ENCODE measurements at regions of chr4 and their contacts with region 1.

Region 1: GRCh38 chr4:119314356-119314755 is 7.6 kb downstream of the FABP2 start:
- DNase-seq: no peak
- H3K4me3 ChIP-seq: no peak overlapping the region
- H3K27me3 ChIP-seq: no peaks in the 10 kb centered on the region
- CTCF ChIP-seq: peak; percentile 47

Region 2: DNA sequence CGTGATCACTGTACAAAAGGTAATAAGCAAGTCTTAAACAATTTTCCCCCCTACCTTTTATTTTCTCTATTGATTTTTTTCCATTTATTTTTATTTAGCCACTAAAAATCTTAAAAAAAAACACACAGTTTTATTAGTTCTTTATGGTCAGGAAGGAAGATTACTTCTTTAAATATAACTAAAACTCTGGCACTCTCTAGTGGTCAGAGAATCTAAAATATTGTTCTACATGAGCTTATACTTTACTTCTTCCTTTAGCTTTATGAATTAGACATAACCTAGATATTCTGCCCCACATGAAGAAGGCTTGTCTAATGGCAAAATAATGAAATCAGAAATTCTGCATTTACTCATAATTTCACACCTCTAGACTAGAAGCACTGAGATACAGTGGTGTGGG is 179.1 kb after region 1 on chr4:
- CTCF ChIA-PET with region 1: interaction called, 21 read pairs
- POLR2A ChIA-PET with region 1: no interaction called
- DNase-seq: no peak
- H3K4me3 ChIP-seq: no peak overlapping the region
- H3K27me3 ChIP-seq: no peaks in the 10 kb centered on the region
- CTCF ChIP-seq: no peak

Region 3: GRCh38 chr4:119746951-119747350 is 432.6 kb after region 1 on chr4:
- CTCF ChIA-PET with region 1: no interaction called
- POLR2A ChIA-PET with region 1: no interaction called
- DNase-seq: no peak
- H3K4me3 ChIP-seq: no peak overlapping the region
- H3K27me3 ChIP-seq: no peaks in the 10 kb centered on the region
- CTCF ChIP-seq: no peak

Region 4: GRCh38 chr4:120056246-120056645 is 741.9 kb after region 1 on chr4:
- CTCF ChIA-PET with region 1: interaction called, 28 read pairs
- POLR2A ChIA-PET with region 1: no interaction called
- DNase-seq: peak; percentile 9
- H3K4me3 ChIP-seq: no peak overlapping the region
- H3K27me3 ChIP-seq: no peaks in the 10 kb centered on the region
- CTCF ChIP-seq: peak; percentile 40